AG04449 (cell line): ENCODE measurements at regions of chr1 and their contacts with region 1.

Region 1: DNA sequence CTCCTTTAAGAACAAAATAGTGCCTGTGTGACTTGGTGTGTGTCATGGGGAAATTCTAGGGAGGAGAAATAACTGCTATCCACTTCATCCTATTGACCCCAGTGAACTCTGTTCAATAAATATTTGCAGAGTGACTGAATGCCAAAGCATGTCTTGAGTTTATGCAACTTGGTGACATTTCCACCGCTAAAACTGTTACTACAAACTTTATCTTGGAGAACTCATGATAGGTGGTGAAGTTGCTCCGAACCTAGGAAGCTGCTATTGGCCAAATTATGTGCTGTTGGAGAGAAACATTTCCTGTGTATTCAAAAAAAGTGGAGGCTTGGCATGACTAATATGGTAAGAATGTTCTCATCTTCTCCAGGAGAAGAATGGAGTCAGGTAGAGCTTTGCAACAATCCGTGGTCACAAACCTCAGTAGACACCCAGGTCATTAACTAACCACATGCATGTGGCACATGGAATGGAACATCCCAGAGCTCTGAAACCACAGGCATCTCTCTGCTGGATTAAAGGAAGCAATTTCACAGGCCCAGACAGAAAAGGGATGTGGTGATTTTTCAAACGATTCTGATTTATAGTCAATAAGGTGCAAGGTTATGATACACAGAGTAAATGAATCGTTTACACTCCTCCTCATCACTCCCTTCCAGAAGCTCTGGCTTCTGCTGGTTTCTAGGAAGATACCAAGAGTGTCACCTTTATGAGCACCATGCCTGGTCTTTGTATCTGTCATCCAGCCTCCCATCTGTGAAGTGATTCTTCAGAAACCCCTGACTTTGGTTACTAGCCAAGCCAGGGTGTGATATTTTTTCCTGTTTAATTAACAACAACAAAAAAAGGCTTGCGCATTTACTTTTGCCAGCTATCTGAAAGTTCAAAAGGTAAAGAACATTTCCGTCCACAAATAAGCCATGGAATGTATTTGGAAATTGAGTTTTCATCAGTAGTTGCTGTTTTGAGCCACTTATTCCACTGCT is 361.1 kb downstream of the TGFB2 start:
- DNase-seq: peak; percentile 97
- H3K4me3 ChIP-seq: no peak overlapping the region
- CTCF ChIP-seq: no peak

Region 2: DNA sequence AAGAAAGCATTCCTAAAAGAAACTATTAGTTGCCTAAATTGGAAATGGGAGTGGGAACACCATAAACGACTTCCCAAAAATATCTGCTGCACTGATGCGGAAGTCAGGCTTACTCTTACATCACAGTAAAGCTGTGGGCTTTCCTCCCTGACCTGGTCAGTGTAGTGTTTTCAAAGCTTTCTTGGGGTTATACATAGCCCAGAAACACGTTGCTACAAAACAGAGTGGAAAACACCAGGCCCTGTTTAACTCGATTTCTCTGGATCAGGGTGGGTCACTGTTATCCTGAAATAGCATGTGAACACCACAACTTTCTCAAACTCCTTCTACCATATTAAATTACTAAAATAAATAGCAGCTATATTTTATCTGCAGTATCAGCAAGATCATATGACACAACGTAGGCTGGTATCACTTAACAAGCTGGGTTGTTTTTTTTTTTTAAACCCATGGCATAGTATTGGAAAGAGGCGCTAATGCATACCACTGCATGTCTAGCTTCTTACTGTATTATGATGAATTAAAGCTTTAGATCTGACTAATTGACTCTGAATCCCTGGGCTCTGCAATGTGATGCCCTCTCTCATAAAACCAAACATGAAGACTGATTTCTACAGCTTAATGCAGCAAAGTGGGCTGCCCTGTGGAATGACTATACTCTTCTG is 176.4 kb before region 1 on chr1:
- CTCF ChIA-PET with region 1: no interaction called
- POLR2A ChIA-PET with region 1: no interaction called
- DNase-seq: no peak
- H3K4me3 ChIP-seq: no peak overlapping the region
- CTCF ChIP-seq: no peak

Region 3: DNA sequence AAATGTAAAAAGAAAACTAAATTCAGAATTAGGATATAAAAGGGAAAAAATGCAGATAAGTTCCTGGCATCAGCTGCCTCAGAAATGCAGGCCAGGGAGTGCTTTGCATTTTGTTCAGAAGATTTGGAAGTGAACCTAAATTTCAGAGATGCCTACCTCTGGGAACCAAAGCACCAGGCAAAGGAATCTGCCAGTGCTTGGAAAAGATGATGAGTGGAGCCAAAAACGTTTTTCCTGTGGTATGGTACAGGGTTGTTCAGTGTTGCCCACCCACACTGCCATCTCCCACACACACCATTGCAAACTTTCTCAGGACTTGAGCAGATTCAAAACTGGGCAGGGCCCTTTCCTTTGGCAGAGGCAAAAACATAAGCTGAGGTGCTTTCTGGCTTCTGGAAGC is 11.6 kb before region 1 on chr1:
- CTCF ChIA-PET with region 1: no interaction called
- POLR2A ChIA-PET with region 1: no interaction called
- DNase-seq: no peak
- H3K4me3 ChIP-seq: no peak overlapping the region
- CTCF ChIP-seq: no peak

Region 4: GRCh38 chr1:218717575-218717974 is 11.4 kb after region 1 on chr1:
- CTCF ChIA-PET with region 1: no interaction called
- POLR2A ChIA-PET with region 1: interaction called, 16 read pairs
- DNase-seq: no peak
- H3K4me3 ChIP-seq: no peak overlapping the region
- CTCF ChIP-seq: no peak

Region 5: GRCh38 chr1:218760601-218761570 is 54.7 kb after region 1 on chr1:
- CTCF ChIA-PET with region 1: no interaction called
- POLR2A ChIA-PET with region 1: no interaction called
- DNase-seq: no peak
- H3K4me3 ChIP-seq: no peak overlapping the region
- CTCF ChIP-seq: no peak